Adrenal gland (tissue), 19 donors: ENCODE measurements at regions of chr17 and their contacts with region 1.

Region 1: DNA sequence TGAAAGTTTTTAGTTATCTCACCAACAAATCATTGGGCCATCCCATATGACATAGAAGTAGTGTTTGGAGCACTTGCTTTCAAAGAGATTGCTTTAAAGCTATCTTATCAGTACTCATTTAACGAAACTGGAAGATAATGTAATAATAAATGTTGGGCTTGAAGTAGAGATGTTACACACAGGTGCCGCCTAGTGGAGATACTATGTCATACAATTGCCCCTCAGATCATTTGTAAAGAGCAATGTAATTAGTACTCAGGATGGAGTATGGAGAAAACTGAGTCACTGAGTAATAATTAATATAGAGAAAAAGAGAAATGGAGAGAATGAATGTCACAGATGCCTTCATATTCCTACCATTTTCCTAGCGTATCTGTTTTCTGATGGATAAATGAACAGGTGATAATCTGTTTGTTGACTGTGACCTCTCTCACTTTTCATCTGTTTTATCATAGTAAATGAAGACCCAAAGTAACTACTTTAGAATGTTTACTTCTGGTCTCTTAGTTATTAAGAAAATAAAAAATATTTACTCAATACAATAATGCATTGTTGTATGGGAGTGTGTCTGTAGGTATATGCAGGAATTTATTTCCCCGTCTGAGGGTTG is 80.4 kb downstream of the EFCAB5 start:
- DNase-seq: peak; percentile 20 to 64 (median 34)
- H3K4me3 ChIP-seq: peak overlapping the region in 1 of 4 donors; percentile 20
- H3K27ac ChIP-seq: no peak overlapping the region
- H3K4me1 ChIP-seq: no peaks in the 10 kb centered on the region
- H3K27me3 ChIP-seq: peaks cover 8% of the 10 kb centered on the region
- CTCF ChIP-seq: peak; percentile 67 to 83 (median 76)
- POLR2A ChIP-seq: no peak

Region 2: GRCh38 chr17:29807520-29808351 is 214.1 kb before region 1 on chr17:
- intact Hi-C with region 1: loop called in 1 of 2 experiments (anchors 10 kb)
- DNase-seq: peak; percentile 57 to 85 (median 75)
- H3K4me3 ChIP-seq: no peak overlapping the region
- H3K27ac ChIP-seq: no peak overlapping the region
- H3K4me1 ChIP-seq: no peaks in the 10 kb centered on the region
- H3K27me3 ChIP-seq: no peaks in the 10 kb centered on the region
- CTCF ChIP-seq: peak; percentile 34 to 87 (median 82)
- POLR2A ChIP-seq: no peak